Right ventricle myocardium inferior (tissue), 1 donor: ENCODE measurements at regions of chr4 and their contacts with region 1.

Region 1: GRCh38 chr4:127782274-127783025 is at the start of gene HSPA4L:
- DNase-seq: peak; percentile 80
- ATAC-seq: peak; percentile 45
- total RNA-seq, gene HSPA4L: 6.2 TPM

Region 2: GRCh38 chr4:127632420-127633403 is 149.7 kb before region 1 on chr4 and contains the start of gene INTU:
- intact Hi-C with region 1: loop called (anchors 5 kb)
- DNase-seq: peak; percentile 95
- ATAC-seq: peak; percentile 99
- total RNA-seq, gene INTU: 4.1 TPM

Region 3: DNA sequence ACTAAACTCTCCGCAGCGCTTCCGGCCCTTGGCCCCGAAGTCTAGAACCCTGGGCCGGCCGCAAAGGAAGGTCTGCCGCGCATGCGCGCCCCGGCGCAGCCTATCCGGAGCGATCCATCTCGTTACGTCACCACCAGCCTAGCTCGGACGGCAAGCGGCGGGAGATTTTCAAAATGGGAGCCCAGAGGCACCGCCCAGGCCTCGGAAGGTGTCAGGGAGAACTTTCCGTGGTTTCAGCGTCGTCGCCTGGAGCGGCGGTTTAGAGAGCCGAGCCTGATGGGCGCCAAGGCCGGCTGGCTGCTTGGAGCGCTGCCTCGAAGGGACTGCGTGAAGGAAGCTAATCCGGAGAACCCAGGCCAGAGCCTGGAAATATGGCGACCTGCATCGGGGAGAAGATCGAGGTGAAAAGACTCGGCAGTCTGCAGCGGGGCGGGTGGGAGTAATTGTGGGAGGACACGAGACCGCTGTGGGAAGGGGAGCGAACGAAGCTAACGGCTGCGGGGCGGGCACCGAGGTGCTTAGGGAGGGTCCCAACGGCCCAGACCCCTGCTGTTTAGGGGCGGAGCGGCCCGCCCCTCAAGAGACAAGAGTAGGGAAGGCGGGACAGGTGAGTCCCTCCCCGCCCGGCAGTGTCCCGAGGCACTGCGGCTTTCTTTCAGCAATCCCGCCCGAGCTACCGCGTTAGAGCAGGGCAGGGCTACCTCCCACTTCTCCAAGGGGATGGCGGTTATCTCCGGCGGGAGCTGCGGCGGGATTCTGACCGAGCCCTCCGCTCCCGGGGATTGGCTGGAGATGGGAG is 98.5 kb after region 1 on chr4 and contains the start of gene PLK4:
- intact Hi-C with region 1: loop called (anchors 5 kb)
- DNase-seq: peak; percentile 97
- ATAC-seq: peak; percentile 99
- total RNA-seq, gene PLK4: 1.1 TPM

Region 4: GRCh38 chr4:127965062-127965802 is 182.8 kb after region 1 on chr4 and contains the starts of genes ABHD18 and MFSD8:
- intact Hi-C with region 1: loop called (anchors 2 kb)
- DNase-seq: peak; percentile 100
- ATAC-seq: peak; percentile 99
- total RNA-seq, gene ABHD18: 11.5 TPM
- total RNA-seq, gene MFSD8: 6.1 TPM

Region 5: GRCh38 chr4:128060699-128061565 is 278.5 kb after region 1 on chr4 and contains the start of gene LARP1B:
- intact Hi-C with region 1: loop called (anchors 10 kb)
- DNase-seq: peak; percentile 97
- ATAC-seq: peak; percentile 97
- total RNA-seq, gene LARP1B: 15.4 TPM